CD4-positive, alpha-beta memory T cell (primary cell): ENCODE measurements at regions of chr7 and their contacts with region 1.

Region 1: GRCh38 chr7:103296901-103297836 is at the start of gene PMPCB:
- DNase-seq: peak; percentile 93 to 96 (median 94)
- H3K4me3 ChIP-seq: peak within 1 kb of the TSS; percentile 70 to 76
- H3K4me3 Mint-ChIP-seq: peak within 1 kb of the TSS; percentile 83 to 94 (median 92)
- H3K27ac ChIP-seq: peak within 1 kb of the TSS; percentile 88
- H3K27ac Mint-ChIP-seq: peak within 1 kb of the TSS; percentile 90 to 96 (median 93)
- H3K4me1 ChIP-seq: peaks cover 29% of the 10 kb centered on the region
- H3K4me1 Mint-ChIP-seq: peaks cover 20 to 46% (median 30%) of the 10 kb centered on the region in 4 donors
- H3K27me3 ChIP-seq: no peaks in the 10 kb centered on the region
- H3K27me3 Mint-ChIP-seq: peaks cover 0 to under 1% of the 10 kb centered on the region in 2 donors
- total RNA-seq, gene PMPCB: 72.7 to 76.2 TPM

Region 2: GRCh38 chr7:103074519-103075336 is 222.4 kb before region 1 on chr7 and contains the starts of genes ARMC10 and FBXL13:
- CTCF ChIA-PET with region 1: no interaction called
- POLR2A ChIA-PET with region 1: interaction called, 3 read pairs
- intact Hi-C with region 1: loop called (anchors 5 kb)
- DNase-seq: peak; percentile 89 to 91 (median 90)
- H3K4me3 ChIP-seq: peak within 1 kb of the TSS; percentile 75 to 79
- H3K4me3 Mint-ChIP-seq: peak within 1 kb of the TSS; percentile 94 to 99 (median 96)
- H3K27ac ChIP-seq: peak within 1 kb of the TSS; percentile 77
- H3K27ac Mint-ChIP-seq: peak within 1 kb of the TSS; percentile 92 to 99 (median 98)
- H3K4me1 ChIP-seq: peaks cover 35% of the 10 kb centered on the region
- H3K4me1 Mint-ChIP-seq: peaks cover 29 to 45% (median 37%) of the 10 kb centered on the region in 4 donors
- H3K27me3 ChIP-seq: no peaks in the 10 kb centered on the region
- H3K27me3 Mint-ChIP-seq: no peaks in the 10 kb centered on the region
- total RNA-seq, gene ARMC10: 28.4 to 28.8 TPM
- total RNA-seq, gene FBXL13: 0.49 to 2.2 TPM

Region 3: GRCh38 chr7:103344453-103345149 is 47.4 kb after region 1 on chr7 and contains the start of gene DNAJC2:
- CTCF ChIA-PET with region 1: interaction called, 8 read pairs
- POLR2A ChIA-PET with region 1: interaction called, 9 read pairs
- intact Hi-C with region 1: loop called (anchors 1 kb)
- DNase-seq: peak; percentile 85 to 91 (median 87)
- H3K4me3 ChIP-seq: peak within 1 kb of the TSS; percentile 70
- H3K4me3 Mint-ChIP-seq: peak within 1 kb of the TSS; percentile 98 to 100 (median 99)
- H3K27ac ChIP-seq: peak within 1 kb of the TSS; percentile 82
- H3K27ac Mint-ChIP-seq: peak within 1 kb of the TSS; percentile 96 to 99 (median 98)
- H3K4me1 ChIP-seq: peaks cover 63% of the 10 kb centered on the region
- H3K4me1 Mint-ChIP-seq: peaks cover 37 to 83% (median 63%) of the 10 kb centered on the region in 4 donors
- H3K27me3 ChIP-seq: no peaks in the 10 kb centered on the region
- H3K27me3 Mint-ChIP-seq: no peaks in the 10 kb centered on the region
- total RNA-seq, gene DNAJC2: 36.0 to 40.5 TPM

Region 4: GRCh38 chr7:103425188-103425587 is 128.0 kb after region 1 on chr7:
- CTCF ChIA-PET with region 1: no interaction called
- POLR2A ChIA-PET with region 1: no interaction called
- intact Hi-C with region 1: no loop called
- DNase-seq: no peak
- H3K4me3 ChIP-seq: no peak overlapping the region
- H3K4me3 Mint-ChIP-seq: no peak overlapping the region
- H3K27ac ChIP-seq: no peak overlapping the region
- H3K27ac Mint-ChIP-seq: no peak overlapping the region
- H3K4me1 ChIP-seq: no peaks in the 10 kb centered on the region
- H3K4me1 Mint-ChIP-seq: no peaks in the 10 kb centered on the region
- H3K27me3 ChIP-seq: no peaks in the 10 kb centered on the region
- H3K27me3 Mint-ChIP-seq: peaks cover 2 to 3% of the 10 kb centered on the region in 2 donors

Region 5: GRCh38 chr7:104156842-104157277 is 859.7 kb after region 1 on chr7:
- CTCF ChIA-PET with region 1: no interaction called
- POLR2A ChIA-PET with region 1: no interaction called
- intact Hi-C with region 1: loop called (anchors 5 kb)
- DNase-seq: peak in 3 of 5 donors; percentile 4 to 9 (median 6)
- H3K4me3 ChIP-seq: no peak overlapping the region
- H3K4me3 Mint-ChIP-seq: no peak overlapping the region
- H3K27ac ChIP-seq: no peak overlapping the region
- H3K27ac Mint-ChIP-seq: no peak overlapping the region
- H3K4me1 ChIP-seq: no peaks in the 10 kb centered on the region
- H3K4me1 Mint-ChIP-seq: peaks cover 0 to 4% (median under 1%) of the 10 kb centered on the region in 4 donors
- H3K27me3 ChIP-seq: no peaks in the 10 kb centered on the region
- H3K27me3 Mint-ChIP-seq: no peaks in the 10 kb centered on the region